ENCODE measurements at regions of chr5 and their contacts with region 1.

Region 1: GRCh38 chr5:59660737-59661136 is 232.8 kb downstream of the PDE4D start:
- DNase-seq: no peak
- ATAC-seq: no peak
- H3K4me3 Mint-ChIP-seq: no peak overlapping the region
- H3K27ac Mint-ChIP-seq: no peak overlapping the region
- H3K4me1 Mint-ChIP-seq: peaks cover 20% of the 10 kb centered on the region
- H3K27me3 Mint-ChIP-seq: peaks cover 3% of the 10 kb centered on the region

Region 2: DNA sequence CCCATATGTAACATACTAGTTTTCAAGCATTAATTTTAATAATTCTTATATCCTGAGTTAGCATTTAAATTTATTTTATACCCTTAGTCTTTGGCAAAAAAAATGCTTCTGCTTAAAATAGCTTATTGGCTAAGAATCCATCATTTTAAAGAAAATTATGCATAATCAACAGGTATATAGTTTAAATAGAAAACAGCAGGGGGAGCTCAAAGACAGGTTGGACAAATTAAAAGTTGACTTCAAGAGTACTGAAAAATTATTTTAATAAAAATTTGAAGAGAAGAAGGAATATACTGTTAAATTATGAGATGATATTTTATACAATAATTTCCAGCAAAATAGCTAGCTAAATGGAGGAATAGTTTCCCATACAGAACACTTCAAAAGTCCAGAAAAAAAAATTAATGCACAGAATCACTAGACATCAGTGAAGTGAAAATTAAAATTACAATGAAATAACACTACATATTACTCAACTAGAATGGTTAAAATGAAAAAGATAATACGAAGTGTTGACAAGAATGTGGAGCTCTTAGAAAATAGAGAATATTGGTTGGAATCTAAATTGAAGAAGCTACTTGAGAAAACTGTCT is 154.4 kb before region 1 on chr5:
- CTCF ChIA-PET with region 1: interaction called, 19 read pairs
- POLR2A ChIA-PET with region 1: no interaction called
- DNase-seq: no peak
- ATAC-seq: no peak
- H3K4me3 Mint-ChIP-seq: no peak overlapping the region
- H3K27ac Mint-ChIP-seq: no peak overlapping the region
- H3K4me1 Mint-ChIP-seq: no peaks in the 10 kb centered on the region
- H3K27me3 Mint-ChIP-seq: peaks cover 7% of the 10 kb centered on the region

Region 3: GRCh38 chr5:59598547-59598874 is 62.2 kb before region 1 on chr5:
- CTCF ChIA-PET with region 1: no interaction called
- POLR2A ChIA-PET with region 1: no interaction called
- DNase-seq: no peak
- ATAC-seq: no peak
- H3K4me3 Mint-ChIP-seq: no peak overlapping the region
- H3K27ac Mint-ChIP-seq: no peak overlapping the region
- H3K4me1 Mint-ChIP-seq: peaks cover 3% of the 10 kb centered on the region
- H3K27me3 Mint-ChIP-seq: peaks cover 11% of the 10 kb centered on the region

Region 4: DNA sequence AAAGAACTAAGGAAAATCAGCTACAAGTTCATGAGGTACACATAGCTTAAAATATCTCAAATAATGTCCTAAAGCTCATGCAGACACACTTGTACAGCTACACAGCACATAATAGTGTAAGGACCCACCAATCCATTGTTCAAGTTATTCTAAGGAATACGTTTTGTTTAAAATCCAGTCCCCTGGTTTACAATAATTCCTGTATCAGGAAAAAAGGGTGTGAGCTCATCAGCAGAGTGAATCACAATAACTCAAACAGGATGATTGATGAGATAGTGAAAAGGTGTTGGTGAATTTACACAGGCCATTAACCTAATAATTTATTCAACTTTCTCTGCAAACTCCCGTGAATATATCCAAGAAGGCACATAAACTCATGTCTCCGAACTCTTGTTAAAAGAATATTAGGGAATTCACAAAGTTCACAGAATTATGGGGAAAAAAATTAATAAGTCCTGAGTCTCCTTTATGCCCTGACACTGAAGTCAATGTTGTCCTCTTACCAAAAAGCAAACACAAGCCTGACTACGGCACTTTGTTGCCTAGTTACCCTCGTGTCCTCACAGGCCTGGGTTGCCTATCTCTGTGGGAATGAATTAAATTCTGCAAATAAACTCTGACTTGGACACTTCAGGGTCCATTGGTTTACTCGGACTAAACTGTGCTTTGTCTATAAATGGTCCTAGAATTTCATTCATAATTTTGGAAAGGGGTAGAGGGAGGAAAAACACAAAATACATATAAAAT is 375.6 kb after region 1 on chr5:
- CTCF ChIA-PET with region 1: no interaction called
- POLR2A ChIA-PET with region 1: no interaction called
- DNase-seq: no peak
- ATAC-seq: no peak
- H3K4me3 Mint-ChIP-seq: no peak overlapping the region
- H3K27ac Mint-ChIP-seq: no peak overlapping the region
- H3K4me1 Mint-ChIP-seq: no peaks in the 10 kb centered on the region
- H3K27me3 Mint-ChIP-seq: no peaks in the 10 kb centered on the region